ENCODE measurements at regions of chr20 and their contacts with region 1.

Region 1: DNA sequence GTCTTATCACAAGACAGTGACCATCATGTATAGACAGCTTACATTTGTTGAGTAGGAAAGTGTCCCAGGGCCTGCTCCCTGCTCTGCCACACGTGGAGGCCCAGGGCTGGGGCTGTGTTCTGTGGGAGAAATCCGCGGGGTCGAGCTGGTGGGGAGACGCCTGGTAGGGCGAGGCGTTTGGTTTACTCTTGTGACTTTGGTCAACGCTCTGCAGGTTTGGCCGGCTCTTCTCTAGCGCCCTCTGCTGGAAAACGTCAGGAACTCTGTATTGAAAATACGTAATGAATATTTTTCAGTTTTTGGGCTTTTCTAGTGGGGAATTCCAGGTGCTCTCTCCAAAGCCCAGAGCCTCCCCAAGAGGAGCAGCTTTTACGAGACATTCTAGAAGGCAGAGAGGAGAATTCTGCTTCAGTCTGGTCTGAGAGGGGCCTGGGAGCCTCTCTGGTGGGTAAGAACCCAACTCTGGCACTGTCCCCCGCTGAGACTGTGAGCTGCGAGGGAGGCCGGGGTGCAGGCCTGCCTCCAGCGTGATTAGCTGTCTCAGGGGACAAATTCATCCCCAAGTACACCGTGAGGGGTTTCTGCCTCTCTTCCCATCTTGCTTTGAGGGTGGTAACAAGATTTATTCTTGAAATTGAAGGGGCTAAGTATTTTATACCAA is 112.6 kb upstream of the RALGAPA2 start:
- DNase-seq: peak; percentile 83
- CTCF ChIP-seq: peak; percentile 80

Region 2: GRCh38 chr20:20593447-20594170 is 231.4 kb before region 1 on chr20:
- CTCF ChIA-PET with region 1: interaction called, 15 read pairs
- POLR2A ChIA-PET with region 1: no interaction called
- DNase-seq: peak; percentile 54
- CTCF ChIP-seq: peak; percentile 22

Region 3: DNA sequence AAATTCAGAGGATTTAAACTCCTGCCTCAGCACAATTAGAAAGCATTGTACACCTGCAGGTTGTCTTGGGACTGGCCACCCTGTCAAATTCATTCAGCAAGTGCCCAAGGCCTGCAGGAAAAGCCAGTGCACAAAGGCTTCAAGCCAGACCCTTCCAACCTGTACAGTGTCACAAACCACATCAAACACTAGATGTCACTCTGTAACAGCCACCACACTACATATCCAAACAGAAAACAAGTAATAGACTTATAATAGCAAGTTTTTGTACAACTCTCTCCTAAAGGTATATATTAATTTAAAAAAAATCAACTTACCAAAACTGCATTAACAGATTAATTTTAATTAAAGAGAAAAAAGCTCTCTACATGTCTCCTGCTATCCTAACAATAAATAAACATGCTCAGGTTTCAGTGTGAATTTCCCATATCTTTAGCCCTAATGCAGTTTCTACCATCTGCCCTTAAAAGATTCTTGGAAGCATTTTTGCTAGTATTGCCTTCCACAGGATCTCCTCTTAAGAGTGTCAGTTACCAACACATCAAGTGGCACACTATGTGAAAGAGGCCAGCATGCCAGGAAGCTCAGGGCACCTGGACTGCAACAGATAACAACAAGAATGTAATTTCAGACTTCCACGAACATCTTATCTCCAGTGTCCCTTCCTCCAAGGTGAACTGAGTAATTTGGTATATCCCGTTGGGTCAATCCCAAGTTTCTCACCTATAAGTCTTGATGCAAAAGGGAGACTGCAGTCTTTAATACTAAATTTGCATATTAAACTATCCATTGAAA is 160.1 kb before region 1 on chr20:
- CTCF ChIA-PET with region 1: interaction called, 92 read pairs
- POLR2A ChIA-PET with region 1: no interaction called
- DNase-seq: peak; percentile 34
- CTCF ChIP-seq: peak; percentile 72

Region 4: DNA sequence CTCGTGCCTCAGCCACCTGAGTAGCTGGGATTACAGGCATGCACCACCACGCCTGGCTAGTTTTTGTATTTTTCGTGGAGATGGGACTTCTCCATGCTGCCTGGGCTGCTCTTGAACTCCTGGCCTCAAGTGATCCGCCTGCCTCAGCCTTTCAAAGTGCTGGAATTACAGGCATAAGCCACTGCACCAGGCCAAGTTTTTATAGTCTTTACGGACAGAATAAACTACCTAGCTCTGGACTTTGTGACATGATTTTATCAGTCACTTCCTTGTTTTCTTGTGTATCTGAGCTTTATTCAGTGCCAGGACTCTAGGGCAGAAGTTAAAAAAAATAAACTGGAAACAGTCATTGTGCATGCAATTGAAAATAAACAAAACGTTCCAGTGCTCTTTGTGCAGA is 65.9 kb before region 1 on chr20:
- CTCF ChIA-PET with region 1: interaction called, 11 read pairs
- POLR2A ChIA-PET with region 1: no interaction called
- DNase-seq: no peak
- CTCF ChIP-seq: no peak

Region 5: DNA sequence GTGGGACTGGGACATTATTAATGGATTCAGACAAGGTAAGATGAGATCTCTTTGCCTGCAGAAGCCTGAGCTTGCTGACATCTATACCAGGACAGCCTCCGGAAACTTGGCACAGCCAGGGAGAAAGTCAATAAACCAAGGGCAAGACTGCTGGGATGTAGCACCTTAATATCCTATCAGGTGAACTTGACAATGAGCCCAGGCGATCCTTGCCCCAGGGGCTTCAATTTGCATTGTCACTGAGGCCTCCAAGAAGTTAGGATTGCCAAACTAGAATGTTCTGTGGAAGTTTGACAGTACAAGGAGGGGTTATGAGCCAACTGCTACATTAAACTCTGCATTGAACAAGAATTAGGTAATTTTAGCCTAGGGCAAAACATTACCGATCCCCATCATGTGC is 52.5 kb before region 1 on chr20:
- CTCF ChIA-PET with region 1: no interaction called
- POLR2A ChIA-PET with region 1: no interaction called
- DNase-seq: no peak
- CTCF ChIP-seq: no peak

Region 6: GRCh38 chr20:20806121-20807095 is 18.6 kb before region 1 on chr20:
- CTCF ChIA-PET with region 1: interaction called, 18 read pairs
- POLR2A ChIA-PET with region 1: no interaction called
- DNase-seq: no peak
- CTCF ChIP-seq: no peak

Region 7: GRCh38 chr20:20812136-20812535 is 12.9 kb before region 1 on chr20:
- CTCF ChIA-PET with region 1: interaction called, 18 read pairs
- POLR2A ChIA-PET with region 1: no interaction called
- DNase-seq: no peak
- CTCF ChIP-seq: no peak

Region 8: DNA sequence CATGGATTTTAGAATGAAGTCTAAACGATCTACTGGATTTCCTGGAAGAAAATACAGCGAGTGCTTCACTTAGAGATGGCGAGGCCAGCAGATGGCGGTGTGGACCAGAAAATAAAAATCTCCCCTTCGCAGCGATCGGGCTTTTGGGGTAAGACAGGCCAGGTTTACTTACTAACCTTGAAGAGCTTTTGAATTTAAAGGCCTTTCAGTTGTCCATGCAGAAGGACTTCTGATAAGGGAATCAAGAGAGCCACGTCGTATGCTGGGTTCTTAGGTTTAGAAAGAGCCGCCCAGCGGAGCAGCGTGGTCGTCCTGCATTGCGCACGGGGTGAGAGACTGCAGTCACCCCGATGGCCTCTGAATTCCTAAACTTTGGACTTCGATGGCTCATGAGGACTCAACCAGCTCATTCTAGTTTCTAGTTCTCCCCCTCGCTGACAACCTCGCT is 12.5 kb after region 1 on chr20:
- CTCF ChIA-PET with region 1: interaction called, 47 read pairs
- POLR2A ChIA-PET with region 1: no interaction called
- DNase-seq: peak; percentile 58
- CTCF ChIP-seq: peak; percentile 64